ENCODE measurements at regions of chr5 and their contacts with region 1.

Region 1: GRCh38 chr5:83281658-83282057 is 189.9 kb upstream of the VCAN start:
- DNase-seq: peak; percentile 94
- ATAC-seq: peak; percentile 94
- H3K4me3 ChIP-seq: no peak overlapping the region
- H3K27ac ChIP-seq: no peak overlapping the region
- H3K4me1 ChIP-seq: peaks cover 20% of the 10 kb centered on the region
- H3K27me3 ChIP-seq: no peaks in the 10 kb centered on the region
- CTCF ChIP-seq: no peak

Region 2: GRCh38 chr5:83321483-83322055 is 39.9 kb after region 1 on chr5:
- CTCF ChIA-PET with region 1: no interaction called
- POLR2A ChIA-PET with region 1: no interaction called
- intact Hi-C with region 1: loop called (anchors 5 kb)
- DNase-seq: peak; percentile 11
- ATAC-seq: peak; percentile 53
- H3K4me3 ChIP-seq: no peak overlapping the region
- H3K27ac ChIP-seq: no peak overlapping the region
- H3K4me1 ChIP-seq: peaks cover 12% of the 10 kb centered on the region
- H3K27me3 ChIP-seq: no peaks in the 10 kb centered on the region
- CTCF ChIP-seq: no peak

Region 3: DNA sequence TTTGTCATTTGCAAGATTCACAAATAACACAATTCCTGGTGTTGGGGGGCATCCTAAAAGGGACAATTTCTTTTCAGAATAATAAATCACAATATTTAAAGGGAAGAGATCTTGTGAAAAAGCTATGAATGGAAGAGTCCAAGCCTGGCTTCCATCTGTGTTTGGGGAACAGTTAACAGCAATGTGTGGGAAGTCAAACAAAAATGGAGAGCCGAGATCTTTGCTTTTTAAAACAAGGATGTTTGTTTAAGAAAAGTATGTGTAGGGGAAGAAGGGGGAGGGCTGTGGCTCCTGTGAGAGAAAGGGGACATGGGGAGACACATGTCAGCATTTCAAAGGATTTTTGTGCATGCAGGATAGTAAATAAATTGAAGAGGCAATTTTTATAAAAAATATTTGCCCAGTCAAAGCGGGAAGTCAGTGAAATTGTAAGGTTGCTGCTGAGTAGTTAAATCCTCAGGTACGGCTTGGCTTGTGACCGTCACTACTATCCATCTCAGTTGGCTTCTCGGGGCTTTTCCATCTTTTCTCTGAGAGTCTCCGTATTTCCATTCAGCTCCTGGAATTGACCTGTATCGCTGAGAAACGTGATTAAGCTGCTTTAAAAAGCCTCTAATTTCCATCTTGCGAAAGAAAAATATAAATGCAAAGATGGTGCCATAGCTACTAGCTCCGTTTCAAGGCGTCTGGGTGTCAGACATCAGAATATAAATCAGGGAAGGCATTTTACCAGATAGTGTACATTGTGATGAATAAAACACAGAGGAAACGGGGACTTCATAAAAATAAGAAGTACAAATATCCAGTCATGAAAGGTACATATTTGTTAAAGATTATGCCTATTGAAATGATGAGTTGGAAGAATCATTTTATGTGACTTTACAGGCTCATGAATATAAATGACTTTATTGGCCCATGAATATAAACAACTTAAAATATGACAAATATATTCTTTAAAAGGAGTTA is 137.0 kb after region 1 on chr5:
- CTCF ChIA-PET with region 1: no interaction called
- POLR2A ChIA-PET with region 1: no interaction called
- intact Hi-C with region 1: loop called (anchors 1 kb)
- DNase-seq: peak; percentile 60
- ATAC-seq: peak; percentile 95
- H3K4me3 ChIP-seq: peak overlapping the region; percentile 66
- H3K27ac ChIP-seq: peak overlapping the region; percentile 39; the same call in 1 of the 2 replicates
- H3K4me1 ChIP-seq: peaks cover 11% of the 10 kb centered on the region; the same call in 1 of the 2 replicates
- H3K27me3 ChIP-seq: no peaks in the 10 kb centered on the region
- CTCF ChIP-seq: no peak

Measured in PC-3 (cell line).